Dendritic cell treated with granulocyte-macrophage colony-stimulating factor and Interleukin-4, amounts not matched to agents 40 ng/mL and 50 ng/mL, for 4 days (primary cell): ENCODE measurements at regions of chr12 and their contacts with region 1.

Region 1: DNA sequence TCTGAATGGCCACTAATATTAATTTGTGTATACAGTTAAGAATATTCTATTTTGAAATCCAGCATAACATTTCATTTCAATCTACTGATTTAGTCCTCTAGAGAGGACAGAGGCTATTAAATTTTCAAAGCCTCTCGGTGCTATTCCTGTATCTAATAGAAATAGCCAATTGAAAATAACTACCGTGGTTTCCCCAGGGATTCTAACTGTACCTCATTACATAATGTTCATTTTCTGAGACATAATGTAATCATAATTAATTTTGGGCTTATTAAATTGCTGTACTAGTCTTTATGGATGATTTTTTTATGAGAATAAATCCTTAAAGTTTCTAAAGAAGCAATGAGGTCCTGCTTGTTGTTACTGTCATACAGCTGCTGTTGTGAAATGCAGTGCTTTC is 38.6 kb upstream of the ACSS3 start:
- H3K4me3 Mint-ChIP-seq: no peak overlapping the region
- H3K27ac Mint-ChIP-seq: no peak overlapping the region
- H3K4me1 Mint-ChIP-seq: no peaks in the 10 kb centered on the region
- H3K27me3 Mint-ChIP-seq: no peaks in the 10 kb centered on the region

Region 2: DNA sequence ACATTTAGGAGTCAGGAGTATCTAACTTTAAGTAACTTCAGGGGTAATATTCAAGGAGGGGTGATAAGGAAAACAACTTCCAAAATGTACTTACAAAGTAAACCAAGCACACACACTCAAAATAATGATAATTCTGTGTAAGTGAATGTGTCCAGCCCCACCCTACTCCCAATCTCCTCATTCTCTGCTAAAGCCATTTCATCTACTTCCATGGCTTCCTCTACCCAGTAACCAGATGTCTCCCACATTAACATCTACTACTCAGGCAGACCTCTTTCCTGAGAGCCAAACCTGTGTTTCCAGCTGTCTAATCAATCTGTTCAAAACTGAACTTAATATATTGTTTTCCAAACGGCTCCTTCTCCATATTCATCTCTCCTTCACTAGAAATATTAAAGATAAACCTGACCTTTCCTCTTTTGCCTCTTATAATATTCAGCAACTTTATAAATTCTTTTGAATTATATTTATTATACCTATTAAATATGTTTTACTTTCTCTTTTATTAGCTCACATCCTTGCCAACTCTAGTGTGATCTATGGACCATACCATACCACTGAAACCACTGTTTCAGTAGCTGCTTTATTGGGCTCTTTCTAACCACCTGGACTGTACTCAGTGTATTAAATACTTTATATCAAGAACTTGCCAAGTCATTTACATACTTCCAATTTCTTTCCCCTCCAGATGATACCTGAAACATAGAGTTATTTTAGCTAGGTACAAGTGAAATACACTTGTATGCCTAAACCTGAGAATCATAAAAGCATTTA is 549.2 kb after region 1 on chr12:
- intact Hi-C with region 1: loop called (anchors 5 kb)
- H3K4me3 Mint-ChIP-seq: no peak overlapping the region
- H3K27ac Mint-ChIP-seq: no peak overlapping the region
- H3K4me1 Mint-ChIP-seq: no peaks in the 10 kb centered on the region
- H3K27me3 Mint-ChIP-seq: no peaks in the 10 kb centered on the region